Left ventricle myocardium inferior (tissue), 1 donor: ENCODE measurements at regions of chr13 and their contacts with region 1.

Region 1: GRCh38 chr13:75372517-75372916 is 109.5 kb downstream of the TBC1D4 start:
- DNase-seq: no peak
- H3K4me3 ChIP-seq: no peak overlapping the region
- H3K27ac ChIP-seq: peak overlapping the region; percentile 63
- H3K4me1 ChIP-seq: peaks cover 83% of the 10 kb centered on the region
- H3K27me3 ChIP-seq: no peaks in the 10 kb centered on the region
- CTCF ChIP-seq: peak; percentile 81

Region 2: GRCh38 chr13:75482070-75482819 is 109.7 kb after region 1 on chr13 and contains the start of gene TBC1D4:
- intact Hi-C with region 1: loop called (anchors 5 kb)
- DNase-seq: peak; percentile 84
- H3K4me3 ChIP-seq: peak within 1 kb of the TSS; percentile 95
- H3K27ac ChIP-seq: peak within 1 kb of the TSS; percentile 95
- H3K4me1 ChIP-seq: peaks cover 56% of the 10 kb centered on the region
- H3K27me3 ChIP-seq: no peaks in the 10 kb centered on the region
- CTCF ChIP-seq: peak; percentile 83
- total RNA-seq, gene TBC1D4: 97.5 TPM